SK-N-SH (cell line): ENCODE measurements at regions of chr11 and their contacts with region 1.

Region 1: GRCh38 chr11:75706260-75706729 is 11.3 kb upstream of the MOGAT2 start:
- DNase-seq: peak; percentile 85
- H3K4me3 ChIP-seq: no peak overlapping the region; a peak in 2 of 4 replicates
- H3K27ac ChIP-seq: no peak overlapping the region
- H3K4me1 ChIP-seq: peaks cover 0 to 7% of the 10 kb centered on the region in 2 experiments; a peak in 1 of 4 replicates
- H3K27me3 ChIP-seq: no peaks in the 10 kb centered on the region
- CTCF ChIP-seq: peak; percentile 80
- EP300 ChIP-seq: no peak
- RAD21 ChIP-seq: peak; percentile 67

Region 2: GRCh38 chr11:75689863-75690609 is 16.3 kb before region 1 on chr11:
- CTCF ChIA-PET with region 1: interaction called, 27 read pairs
- POLR2A ChIA-PET with region 1: no interaction called
- DNase-seq: no peak
- H3K4me3 ChIP-seq: no peak overlapping the region
- H3K27ac ChIP-seq: no peak overlapping the region
- H3K4me1 ChIP-seq: no peaks in the 10 kb centered on the region
- H3K27me3 ChIP-seq: no peaks in the 10 kb centered on the region
- CTCF ChIP-seq: no peak
- EP300 ChIP-seq: no peak
- RAD21 ChIP-seq: no peak

Region 3: DNA sequence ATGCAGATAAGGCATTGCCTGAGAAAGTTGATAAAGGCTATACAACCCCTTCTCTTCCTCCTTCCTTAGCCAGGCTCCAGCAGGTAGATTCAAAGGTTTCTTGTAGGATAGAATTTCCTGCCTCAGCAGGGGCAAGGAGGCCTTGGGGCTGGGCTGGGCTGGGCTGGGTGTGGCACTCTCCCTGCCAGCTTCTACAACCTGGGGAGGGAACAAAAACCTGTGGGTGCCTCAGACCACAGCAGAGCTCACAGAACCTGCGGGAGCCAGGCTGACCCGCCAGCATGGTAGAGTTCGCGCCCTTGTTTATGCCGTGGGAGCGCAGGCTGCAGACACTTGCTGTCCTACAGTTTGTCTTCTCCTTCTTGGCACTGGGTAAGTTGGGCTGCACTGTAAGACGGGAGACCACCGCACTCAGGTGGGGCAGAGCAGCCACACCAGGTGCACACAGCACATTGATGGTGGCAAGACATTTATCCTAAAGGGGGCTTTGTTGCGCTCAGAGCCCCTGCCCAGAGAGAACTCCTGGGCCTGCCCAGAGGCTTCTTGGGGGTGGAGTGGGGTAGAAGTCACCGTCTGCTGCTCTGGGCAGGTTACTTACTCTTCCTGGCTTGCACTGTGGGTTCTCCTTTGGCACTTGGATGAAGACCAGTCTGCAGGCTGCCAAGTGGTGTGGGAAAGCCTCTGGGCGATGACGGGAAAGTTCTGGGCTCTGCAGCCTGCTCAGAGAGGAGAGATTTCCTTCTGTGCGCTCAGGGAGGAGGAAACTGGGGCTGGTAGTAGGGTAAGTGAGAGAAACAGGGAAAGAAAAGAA is 11.5 kb after region 1 on chr11 and contains the start of gene MOGAT2:
- CTCF ChIA-PET with region 1: interaction called, 21 read pairs
- POLR2A ChIA-PET with region 1: no interaction called
- DNase-seq: no peak
- H3K4me3 ChIP-seq: no peak within 1 kb of the TSS
- H3K27ac ChIP-seq: no peak within 1 kb of the TSS
- H3K4me1 ChIP-seq: peaks cover 0 to 15% of the 10 kb centered on the region in 2 experiments; a peak in 2 of 4 replicates
- H3K27me3 ChIP-seq: no peaks in the 10 kb centered on the region; the same call in 1 of the 2 replicates
- CTCF ChIP-seq: no peak
- EP300 ChIP-seq: no peak
- RAD21 ChIP-seq: no peak
- polyA plus RNA-seq, gene MOGAT2: 0.03 TPM in 1 of 2 replicates, not detected in the other

Region 4: GRCh38 chr11:75725547-75726320 is 19.4 kb after region 1 on chr11:
- CTCF ChIA-PET with region 1: interaction called, 21 read pairs
- POLR2A ChIA-PET with region 1: no interaction called
- DNase-seq: peak; percentile 33
- H3K4me3 ChIP-seq: no peak overlapping the region
- H3K27ac ChIP-seq: peak overlapping the region in 1 of 2 experiments; percentile 1; a peak in 1 of 4 replicates
- H3K4me1 ChIP-seq: peaks cover 0 to 12% of the 10 kb centered on the region in 2 experiments; a peak in 1 of 4 replicates
- H3K27me3 ChIP-seq: no peaks in the 10 kb centered on the region
- CTCF ChIP-seq: no peak
- EP300 ChIP-seq: 0 out of 4 replicates have a peak, but pooled peaks of 1 of the 2 experiments have one; percentile 9
- RAD21 ChIP-seq: no peak

Region 5: GRCh38 chr11:75850787-75851186 is 144.5 kb after region 1 on chr11:
- CTCF ChIA-PET with region 1: no interaction called
- POLR2A ChIA-PET with region 1: no interaction called
- DNase-seq: no peak
- H3K4me3 ChIP-seq: no peak overlapping the region
- H3K27ac ChIP-seq: peak overlapping the region in 1 of 2 experiments; percentile 52; a peak in 2 of 4 replicates
- H3K4me1 ChIP-seq: peaks cover 5 to 20% of the 10 kb centered on the region in 2 experiments
- H3K27me3 ChIP-seq: no peaks in the 10 kb centered on the region
- CTCF ChIP-seq: no peak
- EP300 ChIP-seq: no peak
- RAD21 ChIP-seq: no peak

Region 6: GRCh38 chr11:76048763-76049162 is 342.5 kb after region 1 on chr11:
- CTCF ChIA-PET with region 1: no interaction called
- POLR2A ChIA-PET with region 1: no interaction called
- DNase-seq: no peak
- H3K4me3 ChIP-seq: no peak overlapping the region
- H3K27ac ChIP-seq: no peak overlapping the region
- H3K4me1 ChIP-seq: peaks cover 0 to 5% of the 10 kb centered on the region in 2 experiments; a peak in 2 of 4 replicates
- H3K27me3 ChIP-seq: no peaks in the 10 kb centered on the region
- CTCF ChIP-seq: no peak
- EP300 ChIP-seq: no peak
- RAD21 ChIP-seq: no peak